Transverse colon (tissue), 4 donors: ENCODE measurements at regions of chr2 and their contacts with region 1.

Region 1: GRCh38 chr2:42086500-42086953 is 38.7 kb downstream of the PKDCC start:
- DNase-seq: peak; percentile 52
- H3K4me3 ChIP-seq: no peak overlapping the region
- H3K27ac ChIP-seq: peak overlapping the region in 1 of 4 donors; percentile 60
- H3K4me1 ChIP-seq: peaks cover 6 to 41% (median 20%) of the 10 kb centered on the region in 4 donors
- H3K27me3 ChIP-seq: no peaks in the 10 kb centered on the region
- CTCF ChIP-seq: peak; percentile 65 to 90 (median 75)
- EP300 ChIP-seq: no peak
- POLR2A ChIP-seq: no peak

Region 2: DNA sequence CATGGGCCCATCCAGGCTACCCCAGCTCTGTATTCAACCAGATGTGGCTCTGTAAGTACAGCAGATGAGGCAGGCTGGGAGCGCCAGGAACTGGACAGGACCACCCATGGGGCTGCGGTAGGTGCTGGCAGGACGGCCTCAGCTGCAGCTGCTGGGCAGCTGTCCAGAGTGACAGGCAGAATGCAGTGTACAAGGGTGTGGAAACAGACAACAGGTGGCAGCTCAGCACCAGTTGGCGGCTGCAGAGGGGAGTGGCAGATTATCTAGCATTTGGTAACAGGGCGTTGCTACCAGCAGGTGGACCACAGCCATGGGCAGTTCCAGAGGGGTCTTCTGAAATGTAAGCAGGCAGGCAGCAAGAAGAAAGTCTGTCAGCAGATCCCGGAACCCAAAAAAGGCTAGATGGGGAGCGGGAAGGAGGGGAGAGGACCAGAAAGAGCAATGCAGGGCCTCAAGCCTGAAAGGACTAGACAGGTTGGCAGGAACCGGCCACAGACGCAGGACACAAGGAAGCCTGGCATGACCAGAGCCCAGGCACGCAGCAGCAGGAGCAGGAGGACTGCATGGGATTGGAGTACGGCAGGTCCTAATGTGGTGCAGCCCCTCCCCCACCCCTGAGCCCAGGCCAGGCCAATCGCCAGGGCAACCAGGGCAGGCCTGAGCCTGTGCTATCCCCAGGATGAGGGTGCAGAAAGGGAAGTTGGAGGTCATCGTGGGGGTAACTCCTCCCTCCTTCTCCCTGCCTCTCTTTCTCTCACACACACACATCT is 14.0 kb before region 1 on chr2:
- in situ Hi-C with region 1: no loop called
- intact Hi-C with region 1: no loop called
- DNase-seq: peak; percentile 86
- H3K4me3 ChIP-seq: no peak overlapping the region
- H3K27ac ChIP-seq: peak overlapping the region; percentile 49 to 80 (median 70)
- H3K4me1 ChIP-seq: peaks cover 8 to 35% (median 32%) of the 10 kb centered on the region in 4 donors
- H3K27me3 ChIP-seq: no peaks in the 10 kb centered on the region
- CTCF ChIP-seq: peak in 3 of 5 experiments; percentile 13 to 53 (median 49)
- EP300 ChIP-seq: no peak
- POLR2A ChIP-seq: no peak

Region 3: GRCh38 chr2:42127425-42128424 is 41.2 kb after region 1 on chr2:
- in situ Hi-C with region 1: no loop called
- intact Hi-C with region 1: no loop called
- DNase-seq: no peak
- H3K4me3 ChIP-seq: no peak overlapping the region
- H3K27ac ChIP-seq: peak overlapping the region; percentile 5 to 62 (median 50)
- H3K4me1 ChIP-seq: peaks cover 24 to 55% (median 32%) of the 10 kb centered on the region in 4 donors
- H3K27me3 ChIP-seq: no peaks in the 10 kb centered on the region
- CTCF ChIP-seq: no peak
- EP300 ChIP-seq: no peak
- POLR2A ChIP-seq: no peak

Region 4: GRCh38 chr2:42360890-42361727 is 274.6 kb after region 1 on chr2 and contains the start of gene COX7A2L:
- in situ Hi-C with region 1: loop called in 1 of 4 experiments (anchors 25 kb)
- intact Hi-C with region 1: no loop called
- DNase-seq: peak; percentile 98
- H3K4me3 ChIP-seq: peak within 1 kb of the TSS; percentile 76 to 88 (median 84)
- H3K27ac ChIP-seq: peak within 1 kb of the TSS; percentile 92 to 97 (median 94)
- H3K4me1 ChIP-seq: peaks cover 6 to 41% (median 17%) of the 10 kb centered on the region in 4 donors
- H3K27me3 ChIP-seq: no peaks in the 10 kb centered on the region
- CTCF ChIP-seq: peak in 2 of 5 experiments; percentile 5 to 38
- EP300 ChIP-seq: no peak
- POLR2A ChIP-seq: peak; percentile 86
- total RNA-seq, gene COX7A2L: 12.3 to 180 (median 152) TPM